H1 (cell line): ENCODE measurements at regions of chr14 and their contacts with region 1.

Region 1: GRCh38 chr14:21092273-21093011 is 6.0 kb downstream of the ZNF219 start:
- DNase-seq: peak in 1 of 2 experiments; percentile 99
- H3K4me3 ChIP-seq: no peak overlapping the region; a peak in 1 of 8 replicates
- H3K27ac ChIP-seq: peak overlapping the region; percentile 30
- H3K4me1 ChIP-seq: peaks cover 16 to 35% (median 24%) of the 10 kb centered on the region in 4 experiments
- H3K27me3 ChIP-seq: no peaks in the 10 kb centered on the region
- CTCF ChIP-seq: peak; percentile 100
- EP300 ChIP-seq: peak in 1 of 2 experiments; percentile 63; a peak in 1 of 3 replicates
- POLR2A ChIP-seq: peak in 1 of 2 experiments; percentile 68; a peak in 1 of 3 replicates
- RAD21 ChIP-seq: peak; percentile 87 to 92

Region 2: GRCh38 chr14:21039585-21040369 is 52.7 kb before region 1 on chr14:
- CTCF ChIA-PET with region 1: interaction called, 16 read pairs
- POLR2A ChIA-PET with region 1: interaction called, 4 read pairs
- DNase-seq: peak in 1 of 2 experiments; percentile 53
- H3K4me3 ChIP-seq: no peak overlapping the region
- H3K27ac ChIP-seq: no peak overlapping the region
- H3K4me1 ChIP-seq: peaks cover 8 to 11% (median 10%) of the 10 kb centered on the region in 4 experiments; a peak in 6 of 7 replicates
- H3K27me3 ChIP-seq: peaks cover 0 to 3% (median 0%) of the 10 kb centered on the region in 4 experiments; a peak in 1 of 7 replicates
- CTCF ChIP-seq: peak in 2 of 3 experiments; percentile 68 to 83; a peak in 3 of 4 replicates
- EP300 ChIP-seq: no peak
- POLR2A ChIP-seq: no peak
- RAD21 ChIP-seq: peak; percentile 91

Region 3: GRCh38 chr14:21063479-21063878 is 29.0 kb before region 1 on chr14:
- CTCF ChIA-PET with region 1: interaction called, 102 read pairs
- POLR2A ChIA-PET with region 1: interaction called, 148 read pairs
- DNase-seq: no peak
- H3K4me3 ChIP-seq: no peak overlapping the region
- H3K27ac ChIP-seq: no peak overlapping the region
- H3K4me1 ChIP-seq: peaks cover 0 to 2% (median 0%) of the 10 kb centered on the region in 4 experiments; a peak in 2 of 7 replicates
- H3K27me3 ChIP-seq: no peaks in the 10 kb centered on the region; a peak in 2 of 7 replicates
- CTCF ChIP-seq: no peak
- EP300 ChIP-seq: no peak
- POLR2A ChIP-seq: no peak
- RAD21 ChIP-seq: no peak

Region 4: GRCh38 chr14:21078287-21078686 is 14.2 kb before region 1 on chr14:
- CTCF ChIA-PET with region 1: interaction called, 110 read pairs
- POLR2A ChIA-PET with region 1: interaction called, 245 read pairs
- DNase-seq: no peak
- H3K4me3 ChIP-seq: no peak overlapping the region
- H3K27ac ChIP-seq: no peak overlapping the region
- H3K4me1 ChIP-seq: no peaks in the 10 kb centered on the region
- H3K27me3 ChIP-seq: no peaks in the 10 kb centered on the region
- CTCF ChIP-seq: no peak
- EP300 ChIP-seq: no peak
- POLR2A ChIP-seq: no peak
- RAD21 ChIP-seq: no peak

Region 5: DNA sequence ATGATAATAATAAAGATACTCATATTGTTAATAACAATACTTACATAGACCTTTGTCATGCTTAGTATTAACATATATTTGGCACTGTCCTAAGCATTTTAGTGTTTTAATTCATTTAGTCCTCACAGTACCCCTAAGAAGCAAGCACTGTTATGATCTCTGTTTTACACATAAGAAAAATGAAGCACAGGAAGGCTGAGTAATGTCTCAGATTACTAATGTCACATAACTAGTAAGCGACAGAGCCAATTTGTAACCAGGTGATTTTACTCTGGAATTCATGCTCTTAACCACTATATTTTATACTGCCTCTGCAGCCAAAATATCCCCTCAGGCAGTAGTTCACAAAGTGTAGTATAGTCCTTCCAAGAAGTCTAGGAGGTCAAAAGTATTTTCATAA is 28.7 kb after region 1 on chr14:
- CTCF ChIA-PET with region 1: interaction called, 16 read pairs
- POLR2A ChIA-PET with region 1: interaction called, 3 read pairs
- DNase-seq: no peak
- H3K4me3 ChIP-seq: no peak overlapping the region
- H3K27ac ChIP-seq: no peak overlapping the region
- H3K4me1 ChIP-seq: no peaks in the 10 kb centered on the region
- H3K27me3 ChIP-seq: no peaks in the 10 kb centered on the region
- CTCF ChIP-seq: no peak
- EP300 ChIP-seq: no peak
- POLR2A ChIP-seq: no peak
- RAD21 ChIP-seq: no peak

Region 6: DNA sequence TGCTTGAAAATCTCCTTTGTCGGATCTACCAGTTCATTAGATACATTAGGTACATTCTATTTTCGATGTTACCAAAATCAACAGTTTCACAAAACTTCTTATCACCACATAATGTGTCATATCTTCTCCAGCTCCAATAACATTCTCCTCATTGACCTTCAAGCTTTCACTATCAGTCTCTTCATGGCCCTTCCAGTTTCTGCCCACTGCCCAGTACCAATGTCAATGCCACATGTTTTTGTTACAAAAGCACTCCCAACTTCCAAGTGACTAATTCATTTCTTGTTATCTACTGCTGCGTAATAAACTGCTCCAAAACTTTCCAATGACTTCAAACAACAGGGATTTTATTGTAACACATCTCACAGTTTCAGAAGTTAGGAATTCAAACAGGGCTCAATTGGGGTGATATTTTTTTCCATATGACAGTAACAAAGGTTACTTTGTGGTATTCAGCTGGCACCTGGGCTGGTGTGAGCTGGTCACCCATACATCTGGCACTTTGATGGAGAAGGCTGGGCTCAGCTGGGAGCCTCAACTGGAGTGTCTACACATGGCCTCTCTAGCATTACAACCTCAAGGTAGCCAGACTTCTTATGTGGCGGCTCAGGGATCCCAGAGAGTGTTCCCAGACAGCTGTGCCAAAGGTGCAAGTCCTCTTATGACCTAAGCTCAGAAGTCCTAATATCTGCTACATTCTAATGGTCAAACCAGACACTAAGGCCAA is 57.4 kb after region 1 on chr14:
- CTCF ChIA-PET with region 1: no interaction called
- POLR2A ChIA-PET with region 1: no interaction called
- DNase-seq: no peak
- H3K4me3 ChIP-seq: no peak overlapping the region
- H3K27ac ChIP-seq: no peak overlapping the region
- H3K4me1 ChIP-seq: no peaks in the 10 kb centered on the region
- H3K27me3 ChIP-seq: no peaks in the 10 kb centered on the region
- CTCF ChIP-seq: no peak
- EP300 ChIP-seq: no peak
- POLR2A ChIP-seq: no peak
- RAD21 ChIP-seq: no peak